PC-3 (cell line): ENCODE measurements at regions of chr1 and their contacts with region 1.

Region 1: DNA sequence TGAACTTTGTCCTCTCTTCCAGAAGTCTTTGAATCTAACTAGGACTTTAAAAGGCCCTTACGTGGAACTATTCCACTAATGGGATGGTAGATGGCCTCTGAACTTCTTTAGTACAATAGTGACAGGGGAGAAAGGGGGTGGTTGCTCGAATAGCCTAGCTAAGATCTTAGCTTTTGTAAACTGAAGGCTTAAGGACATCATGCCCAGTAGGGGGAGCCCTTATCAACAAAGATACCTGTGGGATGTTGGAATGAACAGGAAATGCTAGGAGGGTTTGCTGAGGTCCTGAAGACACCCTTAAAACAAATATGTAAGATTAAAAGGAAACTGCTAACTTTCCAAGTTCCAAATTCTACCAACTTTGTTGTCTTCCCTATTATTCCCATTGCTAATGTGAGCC is 33.2 kb downstream of the NHLH2 start:
- DNase-seq: peak; percentile 87
- ATAC-seq: peak; percentile 85
- H3K4me3 ChIP-seq: no peak overlapping the region
- H3K27ac ChIP-seq: no peak overlapping the region
- H3K4me1 ChIP-seq: no peaks in the 10 kb centered on the region
- H3K27me3 ChIP-seq: no peaks in the 10 kb centered on the region
- CTCF ChIP-seq: peak; percentile 90

Region 2: DNA sequence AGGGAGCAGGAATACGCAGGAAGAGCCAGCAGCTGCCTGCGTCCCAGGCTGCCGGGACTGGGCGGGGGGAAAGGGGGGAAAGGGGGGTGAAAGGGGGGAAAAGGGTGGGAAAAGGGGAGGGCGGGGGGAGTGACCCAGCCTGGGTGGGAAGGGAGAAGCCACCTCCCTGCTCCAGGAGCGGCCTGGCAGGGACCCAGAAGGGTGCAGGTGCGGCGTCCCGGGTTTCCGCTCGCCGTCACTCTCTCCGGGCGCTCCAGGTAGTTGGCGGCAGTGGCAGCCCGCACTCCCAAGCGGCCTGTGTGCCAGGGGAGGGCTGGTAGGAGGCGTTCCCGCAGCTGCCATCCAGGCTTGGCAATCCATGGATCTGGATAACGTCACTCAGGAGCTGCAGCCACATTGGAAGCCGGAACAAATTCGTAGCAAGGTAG is 328.7 kb before region 1 on chr1:
- CTCF ChIA-PET with region 1: no interaction called
- POLR2A ChIA-PET with region 1: no interaction called
- intact Hi-C with region 1: no loop called
- DNase-seq: peak; percentile 39
- ATAC-seq: peak; percentile 75
- H3K4me3 ChIP-seq: no peak overlapping the region
- H3K27ac ChIP-seq: no peak overlapping the region
- H3K4me1 ChIP-seq: peaks cover 7% of the 10 kb centered on the region
- H3K27me3 ChIP-seq: no peaks in the 10 kb centered on the region
- CTCF ChIP-seq: no peak

Region 3: GRCh38 chr1:115980998-115981993 is 173.6 kb after region 1 on chr1:
- CTCF ChIA-PET with region 1: interaction called, 12 read pairs
- POLR2A ChIA-PET with region 1: no interaction called
- intact Hi-C with region 1: loop called (anchors 1 kb)
- DNase-seq: peak; percentile 64
- ATAC-seq: peak; percentile 55
- H3K4me3 ChIP-seq: no peak overlapping the region
- H3K27ac ChIP-seq: no peak overlapping the region
- H3K4me1 ChIP-seq: peaks cover 19% of the 10 kb centered on the region
- H3K27me3 ChIP-seq: no peaks in the 10 kb centered on the region
- CTCF ChIP-seq: peak; percentile 93

Region 4: DNA sequence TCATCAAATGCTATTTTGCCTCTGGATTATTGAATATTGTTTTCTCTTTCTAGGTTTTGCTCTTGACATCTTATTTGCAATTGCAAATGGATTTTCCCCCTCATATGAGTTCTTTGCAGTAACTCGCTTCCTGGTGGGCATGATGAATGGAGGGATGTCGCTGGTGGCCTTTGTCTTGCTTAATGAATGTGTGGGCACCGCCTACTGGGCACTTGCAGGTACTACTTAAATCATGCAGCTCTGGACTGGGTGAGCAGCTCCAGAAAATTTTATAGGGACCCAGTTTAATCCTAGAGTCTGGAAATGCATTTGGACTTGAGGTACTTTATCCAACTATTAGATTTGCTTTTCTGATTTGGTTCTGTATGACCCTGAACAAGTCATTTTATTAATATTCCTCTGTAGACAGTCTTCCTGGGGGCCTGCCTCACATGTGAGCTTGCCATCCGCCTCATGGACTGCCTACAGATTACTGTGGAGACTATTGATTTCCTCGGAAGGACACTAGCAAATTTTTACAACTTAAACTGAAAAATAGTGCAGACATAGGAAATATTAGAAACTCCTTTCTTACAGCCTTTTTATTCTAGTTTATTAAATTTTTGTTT is 213.0 kb after region 1 on chr1:
- CTCF ChIA-PET with region 1: interaction called, 14 read pairs
- POLR2A ChIA-PET with region 1: no interaction called
- intact Hi-C with region 1: loop called (anchors 2 kb)
- DNase-seq: peak; percentile 77
- ATAC-seq: peak; percentile 85
- H3K4me3 ChIP-seq: no peak overlapping the region
- H3K27ac ChIP-seq: no peak overlapping the region
- H3K4me1 ChIP-seq: no peaks in the 10 kb centered on the region
- H3K27me3 ChIP-seq: no peaks in the 10 kb centered on the region
- CTCF ChIP-seq: peak; percentile 87

Region 5: GRCh38 chr1:116133696-116134650 is 326.2 kb after region 1 on chr1:
- CTCF ChIA-PET with region 1: no interaction called
- POLR2A ChIA-PET with region 1: no interaction called
- intact Hi-C with region 1: loop called (anchors 10 kb)
- DNase-seq: peak; percentile 43
- ATAC-seq: peak; percentile 19
- H3K4me3 ChIP-seq: no peak overlapping the region
- H3K27ac ChIP-seq: no peak overlapping the region
- H3K4me1 ChIP-seq: peaks cover 11% of the 10 kb centered on the region; the same call in 1 of the 2 replicates
- H3K27me3 ChIP-seq: no peaks in the 10 kb centered on the region
- CTCF ChIP-seq: peak; percentile 69

Region 6: DNA sequence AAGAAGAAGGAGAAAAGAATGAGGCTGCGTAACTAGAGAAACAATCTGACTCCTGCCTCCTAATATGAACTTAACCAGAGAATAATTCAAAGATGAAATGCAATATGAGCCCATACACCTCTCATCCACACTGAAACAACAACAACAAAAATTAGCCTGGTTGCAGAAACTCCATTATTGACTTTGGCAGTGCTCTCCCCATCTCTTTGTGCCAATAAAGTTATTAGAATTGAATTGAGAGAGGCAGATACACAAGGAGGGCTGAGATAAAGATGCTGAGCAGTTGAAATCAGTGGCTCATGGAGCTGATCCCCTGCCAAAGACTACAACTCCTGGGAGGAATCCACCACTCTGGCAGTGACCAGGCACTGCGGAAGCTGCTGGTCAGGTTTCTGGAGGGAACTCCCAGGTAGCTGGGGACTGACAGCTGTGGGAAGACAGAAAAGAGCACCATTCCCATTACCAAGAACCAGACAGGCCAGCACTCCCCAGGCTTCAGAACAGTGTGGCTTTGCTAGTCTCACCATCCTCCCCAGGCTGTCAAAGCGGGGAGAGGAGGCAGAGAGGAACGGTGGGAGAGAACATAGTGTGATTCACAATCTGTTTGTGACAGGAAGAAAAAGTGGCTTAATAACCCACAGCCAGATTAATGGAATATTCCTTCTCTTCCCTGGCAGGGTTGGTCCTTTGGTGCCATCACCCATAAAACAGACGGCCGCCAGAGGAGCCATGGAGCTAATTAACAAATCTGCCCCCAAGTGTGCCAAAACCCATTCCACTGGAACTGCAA is 395.4 kb after region 1 on chr1:
- CTCF ChIA-PET with region 1: no interaction called
- POLR2A ChIA-PET with region 1: no interaction called
- intact Hi-C with region 1: no loop called
- DNase-seq: peak; percentile 20
- ATAC-seq: peak; percentile 29; the same call in 1 of the 2 replicates
- H3K4me3 ChIP-seq: no peak overlapping the region
- H3K27ac ChIP-seq: no peak overlapping the region
- H3K4me1 ChIP-seq: no peaks in the 10 kb centered on the region
- H3K27me3 ChIP-seq: peaks cover 40% of the 10 kb centered on the region
- CTCF ChIP-seq: peak; percentile 55